ENCODE measurements at regions of chr7 and their contacts with region 1.

Region 1: GRCh38 chr7:11212080-11212711 is 238.5 kb downstream of the PHF14 start:
- DNase-seq: peak; percentile 24
- H3K4me3 Mint-ChIP-seq: no peak overlapping the region
- H3K27ac Mint-ChIP-seq: no peak overlapping the region
- H3K4me1 Mint-ChIP-seq: peaks cover 12% of the 10 kb centered on the region
- H3K27me3 Mint-ChIP-seq: no peaks in the 10 kb centered on the region

Region 2: DNA sequence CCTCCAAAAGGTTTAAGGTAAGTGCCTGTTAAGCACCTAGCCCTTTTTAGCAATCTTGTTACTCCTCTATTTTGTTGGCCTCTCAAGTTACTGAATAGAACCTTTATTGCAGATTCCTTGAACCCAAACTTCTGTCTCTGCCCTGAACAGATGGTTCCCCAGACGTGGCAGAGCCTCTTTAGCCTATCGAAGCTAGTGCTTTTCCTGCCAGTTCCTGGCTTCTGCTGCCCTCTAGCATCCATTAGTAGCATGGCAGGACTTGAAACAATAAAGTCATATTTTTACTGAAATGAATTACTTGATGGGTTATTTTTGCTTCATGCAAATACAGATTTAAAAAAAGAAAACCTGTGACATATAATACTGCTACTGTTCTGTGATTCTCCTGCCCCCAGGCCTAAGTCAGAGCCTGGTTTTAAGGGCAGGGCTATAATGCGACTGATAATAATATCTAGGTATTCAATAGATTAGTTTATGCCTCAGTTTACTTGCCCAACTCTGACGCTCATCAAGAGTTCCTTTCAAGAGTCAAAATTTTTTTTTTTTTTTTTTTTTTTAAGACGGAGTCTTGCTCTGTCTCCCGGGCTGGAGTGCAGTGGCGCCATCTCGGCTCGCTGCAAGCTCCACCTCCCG is 322.8 kb before region 1 on chr7:
- intact Hi-C with region 1: loop called (anchors 1 kb)
- DNase-seq: peak; percentile 10
- H3K4me3 Mint-ChIP-seq: peak overlapping the region; percentile 18
- H3K27ac Mint-ChIP-seq: no peak overlapping the region
- H3K4me1 Mint-ChIP-seq: peaks cover 10% of the 10 kb centered on the region
- H3K27me3 Mint-ChIP-seq: no peaks in the 10 kb centered on the region

Region 3: GRCh38 chr7:10973061-10973944 is 238.9 kb before region 1 on chr7 and contains the start of gene PHF14:
- intact Hi-C with region 1: loop called (anchors 5 kb)
- DNase-seq: peak; percentile 95
- H3K4me3 Mint-ChIP-seq: peak within 1 kb of the TSS; percentile 95
- H3K27ac Mint-ChIP-seq: peak within 1 kb of the TSS; percentile 92
- H3K4me1 Mint-ChIP-seq: peaks cover 40% of the 10 kb centered on the region
- H3K27me3 Mint-ChIP-seq: peaks cover 17% of the 10 kb centered on the region
- total RNA-seq, gene PHF14: 39.3 and 43.2 TPM in 2 replicates

Region 4: GRCh38 chr7:11006291-11006690 is 205.9 kb before region 1 on chr7:
- intact Hi-C with region 1: no loop called
- DNase-seq: no peak
- H3K4me3 Mint-ChIP-seq: no peak overlapping the region
- H3K27ac Mint-ChIP-seq: no peak overlapping the region
- H3K4me1 Mint-ChIP-seq: peaks cover 11% of the 10 kb centered on the region
- H3K27me3 Mint-ChIP-seq: no peaks in the 10 kb centered on the region

Region 5: DNA sequence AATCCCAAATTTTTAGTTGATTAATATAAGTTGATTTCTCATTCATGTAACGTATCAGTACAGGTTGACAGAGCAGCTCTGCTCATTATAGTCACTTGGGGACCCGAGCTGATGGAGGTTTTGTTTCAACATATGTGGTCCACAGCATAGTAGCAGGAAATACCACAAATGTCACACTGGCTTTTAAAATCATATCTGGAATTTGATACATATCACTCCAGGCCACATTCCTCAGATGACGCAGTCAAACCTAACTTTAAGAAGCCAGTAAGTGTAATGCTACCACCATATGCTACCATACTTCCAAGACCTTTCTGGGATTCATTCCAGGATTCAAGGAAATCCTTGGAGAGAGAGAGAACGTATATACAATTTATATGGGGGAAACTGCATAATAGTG is 82.2 kb before region 1 on chr7:
- intact Hi-C with region 1: loop called (anchors 1 kb)
- DNase-seq: no peak
- H3K4me3 Mint-ChIP-seq: no peak overlapping the region
- H3K27ac Mint-ChIP-seq: peak overlapping the region; percentile 72
- H3K4me1 Mint-ChIP-seq: peaks cover 56% of the 10 kb centered on the region
- H3K27me3 Mint-ChIP-seq: no peaks in the 10 kb centered on the region

Region 6: GRCh38 chr7:11170863-11171568 is 41.2 kb before region 1 on chr7:
- intact Hi-C with region 1: no loop called
- DNase-seq: no peak
- H3K4me3 Mint-ChIP-seq: no peak overlapping the region
- H3K27ac Mint-ChIP-seq: peak overlapping the region; percentile 58
- H3K4me1 Mint-ChIP-seq: peaks cover 9% of the 10 kb centered on the region
- H3K27me3 Mint-ChIP-seq: no peaks in the 10 kb centered on the region

Region 7: GRCh38 chr7:11193131-11193811 is 18.9 kb before region 1 on chr7:
- intact Hi-C with region 1: loop called (anchors 1 kb)
- DNase-seq: no peak
- H3K4me3 Mint-ChIP-seq: peak overlapping the region; percentile 81
- H3K27ac Mint-ChIP-seq: peak overlapping the region; percentile 77
- H3K4me1 Mint-ChIP-seq: peaks cover 29% of the 10 kb centered on the region
- H3K27me3 Mint-ChIP-seq: peaks cover 2% of the 10 kb centered on the region

Region 8: GRCh38 chr7:11228515-11228914 is 16.3 kb after region 1 on chr7:
- intact Hi-C with region 1: no loop called
- DNase-seq: no peak
- H3K4me3 Mint-ChIP-seq: no peak overlapping the region
- H3K27ac Mint-ChIP-seq: no peak overlapping the region
- H3K4me1 Mint-ChIP-seq: no peaks in the 10 kb centered on the region
- H3K27me3 Mint-ChIP-seq: peaks cover 12% of the 10 kb centered on the region

Region 9: DNA sequence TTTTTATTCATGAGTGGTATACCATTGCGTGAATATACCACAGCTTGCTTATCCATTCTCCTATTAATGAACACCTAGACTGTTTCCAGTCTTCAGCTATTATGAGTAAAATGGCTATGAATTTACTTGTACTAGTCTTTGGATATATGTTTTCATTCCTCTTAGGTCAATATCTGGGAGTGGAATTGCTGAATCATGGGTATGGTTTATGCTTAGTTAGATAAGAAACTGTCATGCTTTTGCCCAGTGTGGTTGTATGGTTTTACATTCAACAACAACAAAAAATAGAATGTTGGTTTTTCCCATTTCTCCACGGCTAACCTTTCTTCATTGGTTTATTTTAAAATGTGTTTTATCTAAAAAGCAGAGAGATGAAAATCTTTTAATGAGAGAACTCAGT is 69.8 kb after region 1 on chr7:
- intact Hi-C with region 1: no loop called
- DNase-seq: no peak
- H3K4me3 Mint-ChIP-seq: no peak overlapping the region
- H3K27ac Mint-ChIP-seq: no peak overlapping the region
- H3K4me1 Mint-ChIP-seq: no peaks in the 10 kb centered on the region
- H3K27me3 Mint-ChIP-seq: no peaks in the 10 kb centered on the region